ENCODE measurements at regions of chr12 and their contacts with region 1.

Region 1: GRCh38 chr12:127170226-127171180 is 1096.5 kb upstream of the TMEM132C start:
- DNase-seq: no peak
- ATAC-seq: no peak
- H3K4me3 ChIP-seq: no peak overlapping the region
- H3K27ac ChIP-seq: no peak overlapping the region
- H3K4me1 ChIP-seq: no peaks in the 10 kb centered on the region
- H3K27me3 ChIP-seq: no peaks in the 10 kb centered on the region
- CTCF ChIP-seq: no peak
- EP300 ChIP-seq: no peak
- POLR2A ChIP-seq: no peak
- RAD21 ChIP-seq: no peak

Region 2: DNA sequence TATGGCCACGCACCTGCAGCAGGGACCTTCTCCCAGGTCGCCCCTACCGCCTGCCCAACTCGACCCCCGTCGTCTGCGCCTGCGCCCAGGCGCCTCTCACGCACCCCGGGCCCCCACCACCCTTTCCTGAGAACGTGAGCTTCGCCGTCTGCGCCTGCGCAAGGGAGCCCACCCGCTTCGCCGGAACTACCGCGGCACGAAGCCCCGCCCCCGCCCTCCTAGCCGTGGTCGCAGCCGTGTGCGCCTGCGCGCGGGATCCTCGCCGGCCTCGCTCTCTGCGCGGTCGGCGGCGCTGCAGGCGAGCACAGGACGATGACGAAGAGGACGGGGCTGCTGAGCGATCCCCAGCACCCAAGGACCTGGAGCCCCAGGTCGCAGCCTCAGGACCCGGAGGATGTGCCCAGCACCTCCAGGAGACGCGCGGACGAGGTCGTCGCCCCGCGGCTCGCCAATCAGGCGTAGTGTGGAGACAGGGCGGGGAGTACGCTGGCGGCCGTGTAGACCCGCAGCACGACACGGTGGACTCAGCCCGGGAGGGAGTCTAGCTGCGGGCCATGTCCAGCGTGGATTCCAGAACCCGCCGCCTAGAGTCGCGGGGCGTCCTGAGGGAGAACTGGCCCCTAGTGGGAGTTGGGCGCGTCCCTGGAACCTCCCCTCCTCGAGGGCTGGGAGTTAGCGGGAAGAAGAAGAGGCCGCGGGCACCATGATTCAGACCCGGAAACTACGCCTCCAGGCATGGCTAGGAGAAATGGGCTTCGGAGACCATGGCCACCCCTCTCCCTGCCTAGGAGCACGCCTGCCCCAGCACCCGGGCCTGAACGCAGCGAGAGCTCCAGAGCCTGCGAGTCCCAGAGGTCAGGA is 24.3 kb before region 1 on chr12:
- CTCF ChIA-PET with region 1: no interaction called
- POLR2A ChIA-PET with region 1: no interaction called
- in situ Hi-C with region 1: no loop called
- intact Hi-C with region 1: no loop called
- DNase-seq: no peak
- ATAC-seq: no peak
- H3K4me3 ChIP-seq: no peak overlapping the region
- H3K27ac ChIP-seq: no peak overlapping the region
- H3K4me1 ChIP-seq: no peaks in the 10 kb centered on the region
- H3K27me3 ChIP-seq: no peaks in the 10 kb centered on the region
- CTCF ChIP-seq: no peak
- EP300 ChIP-seq: no peak
- POLR2A ChIP-seq: no peak
- RAD21 ChIP-seq: no peak

Region 3: DNA sequence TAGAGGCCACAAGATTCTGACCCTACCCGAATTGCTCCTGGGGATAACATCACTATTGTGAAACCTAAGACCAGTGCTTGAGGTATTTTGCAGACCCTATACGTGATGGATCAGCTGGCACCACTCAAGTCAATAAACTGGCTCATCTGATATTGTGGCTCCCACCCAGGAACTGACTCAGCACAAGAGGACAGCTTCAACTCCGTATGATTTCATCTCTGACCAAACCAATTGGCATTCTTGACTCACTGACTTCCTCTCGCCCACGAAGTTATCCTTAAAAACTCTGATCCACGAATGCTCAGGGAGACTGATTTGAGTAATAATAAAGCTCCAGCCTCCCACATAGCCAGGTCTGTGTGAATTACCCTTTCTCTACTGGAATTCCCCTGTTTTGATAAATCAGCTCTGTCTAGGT is 60.3 kb after region 1 on chr12:
- CTCF ChIA-PET with region 1: no interaction called
- POLR2A ChIA-PET with region 1: no interaction called
- in situ Hi-C with region 1: no loop called
- intact Hi-C with region 1: loop called (anchors 10 kb)
- DNase-seq: no peak
- ATAC-seq: no peak
- H3K4me3 ChIP-seq: no peak overlapping the region
- H3K27ac ChIP-seq: no peak overlapping the region
- H3K4me1 ChIP-seq: no peaks in the 10 kb centered on the region
- H3K27me3 ChIP-seq: no peaks in the 10 kb centered on the region
- CTCF ChIP-seq: no peak
- EP300 ChIP-seq: no peak
- POLR2A ChIP-seq: no peak
- RAD21 ChIP-seq: no peak

Measured in HepG2 (cell line).